ENCODE measurements at regions of chr13 and their contacts with region 1.

Region 1: GRCh38 chr13:40517486-40518480 is 148.7 kb downstream of the FOXO1 start:
- DNase-seq: no peak
- H3K4me3 Mint-ChIP-seq: peak overlapping the region; percentile 42
- H3K27ac Mint-ChIP-seq: peak overlapping the region; percentile 81
- H3K4me1 Mint-ChIP-seq: peaks cover 57% of the 10 kb centered on the region
- H3K27me3 Mint-ChIP-seq: no peaks in the 10 kb centered on the region

Region 2: DNA sequence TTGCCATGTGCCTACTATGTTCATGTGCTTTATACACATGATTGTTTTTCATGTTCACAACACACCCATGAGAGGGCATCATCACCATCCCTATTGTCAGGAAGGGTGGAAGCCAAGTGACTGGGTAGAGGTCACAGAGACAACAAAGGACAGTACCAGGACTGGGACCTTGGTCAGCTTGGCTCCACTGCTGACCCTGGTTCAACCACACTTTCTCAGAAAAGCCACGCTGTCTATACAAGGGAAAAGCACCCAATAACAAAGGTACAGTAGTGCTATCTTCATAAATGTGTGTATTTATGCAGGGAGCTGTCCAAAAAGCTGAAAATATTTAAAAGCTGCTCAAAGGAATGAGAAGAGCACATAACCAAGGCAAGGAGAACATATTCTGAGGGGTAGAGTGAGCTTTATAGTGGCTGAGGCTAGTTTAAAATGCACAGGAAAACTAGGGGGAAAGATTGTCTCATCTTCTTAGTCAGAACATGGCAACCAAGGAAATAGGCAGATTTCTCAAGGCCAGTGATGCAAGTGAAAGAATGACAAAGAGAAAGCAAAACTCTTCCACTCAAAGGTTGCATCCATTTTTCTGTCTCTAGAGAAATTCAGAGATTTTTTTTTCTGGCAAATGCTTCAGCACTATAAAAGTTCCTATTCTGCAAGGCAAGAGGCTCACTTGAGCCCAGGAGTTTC is 266.3 kb before region 1 on chr13:
- intact Hi-C with region 1: loop called (anchors 10 kb)
- DNase-seq: no peak
- H3K4me3 Mint-ChIP-seq: no peak overlapping the region
- H3K27ac Mint-ChIP-seq: peak overlapping the region; percentile 75
- H3K4me1 Mint-ChIP-seq: peaks cover 32% of the 10 kb centered on the region
- H3K27me3 Mint-ChIP-seq: no peaks in the 10 kb centered on the region

Region 3: GRCh38 chr13:40438999-40439797 is 78.6 kb before region 1 on chr13:
- intact Hi-C with region 1: loop called (anchors 5 kb)
- DNase-seq: no peak
- H3K4me3 Mint-ChIP-seq: peak overlapping the region; percentile 52
- H3K27ac Mint-ChIP-seq: peak overlapping the region; percentile 78
- H3K4me1 Mint-ChIP-seq: peaks cover 30% of the 10 kb centered on the region
- H3K27me3 Mint-ChIP-seq: no peaks in the 10 kb centered on the region

Region 4: GRCh38 chr13:40597740-40598370 is 80.1 kb after region 1 on chr13:
- intact Hi-C with region 1: loop called (anchors 5 kb)
- DNase-seq: no peak
- H3K4me3 Mint-ChIP-seq: peak overlapping the region; percentile 7
- H3K27ac Mint-ChIP-seq: peak overlapping the region; percentile 47
- H3K4me1 Mint-ChIP-seq: peaks cover 67% of the 10 kb centered on the region
- H3K27me3 Mint-ChIP-seq: no peaks in the 10 kb centered on the region

Region 5: DNA sequence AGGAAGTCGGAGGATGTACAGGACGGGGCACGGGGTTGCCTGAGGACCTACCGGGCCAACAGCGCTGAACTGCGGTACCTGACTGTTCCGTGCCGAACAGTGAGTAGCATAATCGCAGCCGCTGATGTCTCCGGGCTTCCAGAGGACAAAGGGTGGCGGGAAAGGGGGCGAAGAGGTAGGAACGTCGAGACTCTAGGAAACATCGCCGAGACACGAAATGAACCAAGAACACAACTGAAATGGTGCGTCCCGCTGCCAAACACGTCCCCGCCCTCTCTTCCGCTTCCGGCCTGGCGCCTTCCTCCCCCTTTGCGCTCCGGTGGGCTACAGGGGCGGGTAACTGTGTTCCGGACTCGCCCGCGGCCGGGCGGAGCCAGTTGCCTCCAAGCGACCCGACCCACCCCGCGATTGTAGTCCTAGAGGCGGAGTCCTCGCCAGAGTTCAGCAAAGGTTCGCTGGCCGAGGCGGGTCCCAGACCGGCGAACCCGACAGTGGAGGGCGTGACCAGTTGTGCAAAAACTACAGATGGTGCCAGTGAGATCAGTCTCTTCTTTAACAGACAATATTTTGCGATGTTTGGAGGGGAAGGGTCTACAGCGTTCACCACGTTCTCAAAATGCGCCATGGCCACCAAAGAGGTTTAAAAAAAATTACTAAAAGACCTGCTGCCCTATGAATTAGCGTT is 253.3 kb after region 1 on chr13 and contains the start of gene MRPS31:
- intact Hi-C with region 1: loop called (anchors 5 kb)
- DNase-seq: peak; percentile 94
- H3K4me3 Mint-ChIP-seq: peak within 1 kb of the TSS; percentile 89
- H3K27ac Mint-ChIP-seq: peak within 1 kb of the TSS; percentile 90
- H3K4me1 Mint-ChIP-seq: peaks cover 36% of the 10 kb centered on the region
- H3K27me3 Mint-ChIP-seq: no peaks in the 10 kb centered on the region
- total RNA-seq, gene MRPS31: 42.9 and 43.1 TPM in 2 replicates

Measured in activated T-helper 2 cell treated with anti-CD3 and anti-CD28 coated beads, Interferon-gamma antibody, Interleukin-2, Interleukin-4, amounts not matched to agents 10 μg/mL and 5 μg/mL and 100 μg/mL, durations not matched to agents 14 hours and 24 hours and 36 hours (primary cell).